ENCODE measurements at regions of chr10 and their contacts with region 1.

Region 1: GRCh38 chr10:67849331-67850011 is 11.5 kb upstream of the DNAJC12 start:
- DNase-seq: peak; percentile 86 to 96 (median 93)
- ATAC-seq: peak; percentile 99
- H3K4me3 ChIP-seq: peak overlapping the region; percentile 61 to 97
- H3K4me3 Mint-ChIP-seq: peak overlapping the region; percentile 94
- H3K27ac ChIP-seq: peak overlapping the region; percentile 64 to 96
- H3K27ac Mint-ChIP-seq: peak overlapping the region; percentile 96
- H3K4me1 ChIP-seq: peaks cover 5% of the 10 kb centered on the region
- H3K4me1 Mint-ChIP-seq: peaks cover 10% of the 10 kb centered on the region
- H3K27me3 ChIP-seq: no peaks in the 10 kb centered on the region
- H3K27me3 Mint-ChIP-seq: no peaks in the 10 kb centered on the region
- CTCF ChIP-seq: no peak

Region 2: DNA sequence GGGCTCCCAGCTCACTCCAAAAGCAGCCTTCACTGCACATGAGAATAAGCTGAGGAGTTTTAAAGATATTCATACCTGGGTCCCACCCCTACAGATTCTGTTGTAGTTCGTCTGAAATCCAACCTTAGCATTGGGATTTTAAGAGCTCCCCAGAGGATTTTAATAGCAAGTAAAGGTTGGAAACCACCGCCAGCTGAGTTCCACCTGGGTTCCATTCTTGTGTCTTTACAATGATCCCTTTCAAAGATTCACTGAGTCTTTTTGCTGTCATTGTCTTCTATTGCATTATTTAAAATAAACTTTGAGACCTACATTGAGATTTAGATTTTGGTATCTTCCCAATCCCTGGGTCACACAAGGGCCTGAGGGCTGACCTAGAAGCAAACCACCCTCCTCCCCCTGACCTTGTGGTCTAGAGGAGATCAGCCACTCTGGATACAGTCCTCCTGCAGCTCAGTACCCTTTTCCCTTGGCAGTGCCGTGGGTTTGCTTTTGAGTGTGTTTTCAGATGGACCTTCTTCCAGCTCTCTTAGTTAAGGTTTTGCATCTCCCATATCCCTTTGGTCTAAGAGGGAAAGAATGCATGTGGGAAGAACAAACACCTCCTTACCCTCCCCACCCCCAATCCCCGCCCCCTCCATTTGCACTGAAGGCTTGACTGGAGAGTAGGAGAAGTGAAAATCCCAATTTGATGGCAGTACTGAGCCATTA is 12.4 kb after region 1 on chr10:
- CTCF ChIA-PET with region 1: interaction called, 20 read pairs
- POLR2A ChIA-PET with region 1: no interaction called
- intact Hi-C with region 1: no loop called
- DNase-seq: no peak
- ATAC-seq: no peak
- H3K4me3 ChIP-seq: no peak overlapping the region
- H3K4me3 Mint-ChIP-seq: no peak overlapping the region
- H3K27ac ChIP-seq: no peak overlapping the region
- H3K27ac Mint-ChIP-seq: no peak overlapping the region
- H3K4me1 ChIP-seq: no peaks in the 10 kb centered on the region
- H3K4me1 Mint-ChIP-seq: no peaks in the 10 kb centered on the region
- H3K27me3 ChIP-seq: no peaks in the 10 kb centered on the region
- H3K27me3 Mint-ChIP-seq: no peaks in the 10 kb centered on the region
- CTCF ChIP-seq: no peak

Region 3: DNA sequence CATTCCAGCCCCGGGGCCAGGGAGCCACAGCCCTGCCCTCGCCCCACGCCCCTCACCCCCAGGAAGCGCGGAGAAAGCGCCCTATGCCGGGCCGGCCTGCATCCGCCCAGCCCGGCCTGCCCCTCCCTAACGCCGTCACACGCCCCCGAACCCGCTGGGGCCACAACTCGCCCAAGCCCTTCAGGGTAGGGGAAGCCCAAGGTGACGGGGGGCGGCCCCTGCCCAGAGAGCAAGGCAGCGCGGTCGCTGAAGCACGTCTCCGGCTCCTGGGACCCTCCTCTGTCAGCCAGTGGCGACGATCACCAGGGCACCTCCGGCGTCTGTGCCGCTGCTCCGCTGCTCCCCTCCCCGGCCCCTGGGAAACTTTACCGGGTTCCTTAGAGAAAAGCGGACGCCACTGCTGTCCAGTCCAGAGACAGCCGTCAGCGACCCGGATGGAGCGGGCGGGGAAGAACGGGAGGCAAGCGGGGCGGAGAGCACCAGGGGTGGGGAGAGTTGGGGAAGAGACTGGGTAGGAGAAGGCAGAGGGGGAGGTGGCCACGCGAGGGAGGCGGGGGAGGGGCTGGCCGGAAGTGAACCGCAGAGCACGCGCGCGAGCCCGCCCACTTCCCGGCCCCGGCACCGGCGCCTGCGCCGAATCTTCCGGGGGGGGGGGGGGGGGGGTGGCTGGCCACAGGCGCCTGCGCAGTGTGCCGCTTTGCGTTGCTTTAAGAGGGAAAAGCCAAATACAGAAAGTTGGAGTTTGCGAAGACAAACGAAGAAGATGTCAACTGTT is 225.5 kb after region 1 on chr10 and contains the start of gene HERC4:
- CTCF ChIA-PET with region 1: no interaction called
- POLR2A ChIA-PET with region 1: no interaction called
- intact Hi-C with region 1: loop called (anchors 2 kb)
- DNase-seq: peak; percentile 83 to 96 (median 90)
- ATAC-seq: peak; percentile 90
- H3K4me3 ChIP-seq: peak within 1 kb of the TSS; percentile 96
- H3K4me3 Mint-ChIP-seq: peak within 1 kb of the TSS; percentile 96
- H3K27ac ChIP-seq: peak within 1 kb of the TSS; percentile 91 to 96
- H3K27ac Mint-ChIP-seq: peak within 1 kb of the TSS; percentile 93
- H3K4me1 ChIP-seq: peaks cover 38% of the 10 kb centered on the region
- H3K4me1 Mint-ChIP-seq: peaks cover 40% of the 10 kb centered on the region
- H3K27me3 ChIP-seq: no peaks in the 10 kb centered on the region
- H3K27me3 Mint-ChIP-seq: no peaks in the 10 kb centered on the region
- CTCF ChIP-seq: no peak
- total RNA-seq, gene HERC4: 28.4 to 29.2 TPM

Region 4: DNA sequence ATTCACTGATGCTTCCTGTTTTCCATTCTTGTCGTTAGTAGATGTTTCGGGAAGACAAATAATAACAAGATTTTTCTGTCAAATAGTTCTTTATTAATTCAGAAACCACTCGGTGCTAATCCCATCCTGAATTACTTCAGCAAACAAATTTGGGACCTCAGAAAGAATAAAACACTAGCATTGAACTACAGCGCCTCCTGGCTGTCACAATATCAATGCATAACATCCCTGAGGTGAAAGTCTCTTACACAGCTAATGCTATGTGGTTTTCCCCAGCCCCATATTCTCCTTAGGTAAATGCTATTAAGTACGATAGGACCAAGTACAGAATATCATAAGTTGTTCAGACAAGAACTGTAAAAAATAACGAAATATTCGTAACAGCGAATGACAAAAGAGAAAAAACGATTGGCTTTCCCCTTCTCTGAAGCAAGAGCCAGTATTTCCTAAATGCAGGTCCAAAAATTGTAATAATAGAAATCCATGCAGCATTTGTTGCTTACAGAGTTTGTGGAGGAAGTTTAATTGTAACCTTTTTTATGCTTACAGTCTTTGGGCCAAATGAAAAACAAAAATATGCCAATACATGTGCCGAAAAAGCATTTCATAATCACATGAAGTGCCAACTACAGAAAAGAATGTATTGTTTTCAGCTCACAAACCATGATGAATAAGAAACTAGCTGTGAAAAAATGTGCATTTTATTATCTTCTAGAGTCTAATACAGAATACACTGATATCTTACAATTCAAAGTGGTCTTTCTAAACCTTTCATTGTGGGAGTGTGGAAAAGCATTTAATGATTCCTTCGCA is 307.1 kb after region 1 on chr10:
- CTCF ChIA-PET with region 1: interaction called, 155 read pairs
- POLR2A ChIA-PET with region 1: interaction called, 4 read pairs
- intact Hi-C with region 1: no loop called
- DNase-seq: peak; percentile 12 to 77 (median 58)
- ATAC-seq: peak; percentile 71
- H3K4me3 ChIP-seq: no peak overlapping the region
- H3K4me3 Mint-ChIP-seq: no peak overlapping the region
- H3K27ac ChIP-seq: no peak overlapping the region
- H3K27ac Mint-ChIP-seq: no peak overlapping the region
- H3K4me1 ChIP-seq: no peaks in the 10 kb centered on the region
- H3K4me1 Mint-ChIP-seq: no peaks in the 10 kb centered on the region
- H3K27me3 ChIP-seq: no peaks in the 10 kb centered on the region
- H3K27me3 Mint-ChIP-seq: peaks cover 5% of the 10 kb centered on the region
- CTCF ChIP-seq: peak; percentile 94

Region 5: GRCh38 chr10:68406815-68407548 is 557.5 kb after region 1 on chr10 and contains the start of gene RUFY2:
- CTCF ChIA-PET with region 1: no interaction called
- POLR2A ChIA-PET with region 1: no interaction called
- intact Hi-C with region 1: loop called (anchors 1 to 5 kb)
- DNase-seq: peak; percentile 56 to 89 (median 76)
- ATAC-seq: peak; percentile 92
- H3K4me3 ChIP-seq: peak within 1 kb of the TSS; percentile 95 to 99
- H3K4me3 Mint-ChIP-seq: peak within 1 kb of the TSS; percentile 92
- H3K27ac ChIP-seq: peak within 1 kb of the TSS; percentile 69 to 78
- H3K27ac Mint-ChIP-seq: peak within 1 kb of the TSS; percentile 82
- H3K4me1 ChIP-seq: peaks cover 10% of the 10 kb centered on the region
- H3K4me1 Mint-ChIP-seq: peaks cover 19% of the 10 kb centered on the region
- H3K27me3 ChIP-seq: no peaks in the 10 kb centered on the region
- H3K27me3 Mint-ChIP-seq: no peaks in the 10 kb centered on the region
- CTCF ChIP-seq: peak; percentile 81
- total RNA-seq, gene RUFY2: 11.7 to 13.7 TPM

Region 6: GRCh38 chr10:68705548-68705947 is 856.1 kb after region 1 on chr10:
- CTCF ChIA-PET with region 1: no interaction called
- POLR2A ChIA-PET with region 1: no interaction called
- intact Hi-C with region 1: no loop called
- DNase-seq: no peak
- ATAC-seq: no peak
- H3K4me3 ChIP-seq: no peak overlapping the region
- H3K4me3 Mint-ChIP-seq: no peak overlapping the region
- H3K27ac ChIP-seq: no peak overlapping the region
- H3K27ac Mint-ChIP-seq: no peak overlapping the region
- H3K4me1 ChIP-seq: no peaks in the 10 kb centered on the region
- H3K4me1 Mint-ChIP-seq: no peaks in the 10 kb centered on the region
- H3K27me3 ChIP-seq: no peaks in the 10 kb centered on the region
- H3K27me3 Mint-ChIP-seq: no peaks in the 10 kb centered on the region
- CTCF ChIP-seq: no peak

Measured in CD8-positive, alpha-beta T cell (primary cell).